Activated T-helper 2 cell treated with anti-CD3 and anti-CD28 coated beads, Interferon-gamma antibody, Interleukin-2, Interleukin-4, amounts not matched to agents 10 μg/mL and 5 μg/mL and 100 μg/mL, durations not matched to agents 14 hours and 24 hours and 36 hours (primary cell): ENCODE measurements at regions of chrX and their contacts with region 1.

Region 1: DNA sequence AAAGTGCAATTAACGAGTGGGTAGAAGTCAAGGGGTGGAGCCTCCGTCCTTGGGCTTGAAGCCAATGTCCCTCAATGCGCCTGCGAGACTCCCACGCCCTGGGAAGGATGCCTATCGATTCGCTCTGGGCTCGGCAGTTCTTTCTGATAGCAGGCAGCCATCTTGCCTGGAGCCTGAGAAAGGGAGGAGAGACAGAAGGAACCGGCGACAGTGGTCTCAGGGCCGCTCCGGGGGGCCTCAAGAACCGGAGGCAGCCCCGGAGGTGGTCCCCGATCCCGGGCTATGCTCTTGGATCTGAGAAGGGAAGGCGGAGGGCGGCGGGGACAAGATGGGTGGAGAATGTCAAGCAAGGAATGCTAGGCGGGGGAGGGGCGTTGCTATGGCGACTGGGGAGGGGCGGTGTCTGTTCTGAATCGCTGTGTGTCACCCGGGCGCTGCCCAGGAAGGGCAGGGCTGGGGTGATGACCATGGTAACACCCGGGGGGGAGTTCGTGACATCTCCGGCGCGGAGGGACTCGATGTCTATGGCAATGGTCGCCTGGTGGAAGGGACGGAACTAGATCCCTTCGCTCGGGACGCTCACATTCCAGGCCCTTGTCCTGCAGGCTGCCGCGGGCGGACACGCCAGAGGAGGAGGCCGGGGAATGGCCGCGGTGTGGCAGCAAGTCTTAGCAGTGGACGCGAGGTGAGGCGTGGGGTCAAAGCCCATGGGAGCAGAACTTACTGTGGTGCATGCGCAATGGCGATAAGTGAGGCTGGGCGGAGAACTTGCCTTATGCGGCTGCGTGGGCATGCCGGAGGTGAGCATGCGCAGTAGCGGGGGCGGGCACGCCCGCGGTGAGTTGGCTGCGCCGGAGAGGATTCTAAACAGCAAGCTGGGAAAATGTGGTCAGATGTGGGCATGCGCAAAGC is at the start of gene WDR13:
- DNase-seq: peak; percentile 86
- H3K4me3 Mint-ChIP-seq: peak within 1 kb of the TSS; percentile 94
- H3K27ac Mint-ChIP-seq: peak within 1 kb of the TSS; percentile 99
- H3K4me1 Mint-ChIP-seq: peaks cover 6% of the 10 kb centered on the region
- H3K27me3 Mint-ChIP-seq: no peaks in the 10 kb centered on the region
- total RNA-seq, gene WDR13: 43.4 and 44.7 TPM in 2 replicates

Region 2: GRCh38 chrX:48475774-48476577 is 121.6 kb before region 1 on chrX and contains the start of gene FTSJ1:
- intact Hi-C with region 1: loop called (anchors 5 kb)
- DNase-seq: peak; percentile 88
- H3K4me3 Mint-ChIP-seq: peak within 1 kb of the TSS; percentile 98
- H3K27ac Mint-ChIP-seq: peak within 1 kb of the TSS; percentile 95
- H3K4me1 Mint-ChIP-seq: peaks cover 32% of the 10 kb centered on the region
- H3K27me3 Mint-ChIP-seq: no peaks in the 10 kb centered on the region
- total RNA-seq, gene FTSJ1: 84.6 and 89.8 TPM in 2 replicates

Region 3: GRCh38 chrX:48574270-48575266 is 23.0 kb before region 1 on chrX and contains the start of gene RBM3:
- intact Hi-C with region 1: loop called (anchors 1 kb)
- DNase-seq: peak; percentile 89
- H3K4me3 Mint-ChIP-seq: peak within 1 kb of the TSS; percentile 99
- H3K27ac Mint-ChIP-seq: peak within 1 kb of the TSS; percentile 100
- H3K4me1 Mint-ChIP-seq: peaks cover 17% of the 10 kb centered on the region
- H3K27me3 Mint-ChIP-seq: no peaks in the 10 kb centered on the region
- total RNA-seq, gene RBM3: 345 and 346 TPM in 2 replicates

Region 4: DNA sequence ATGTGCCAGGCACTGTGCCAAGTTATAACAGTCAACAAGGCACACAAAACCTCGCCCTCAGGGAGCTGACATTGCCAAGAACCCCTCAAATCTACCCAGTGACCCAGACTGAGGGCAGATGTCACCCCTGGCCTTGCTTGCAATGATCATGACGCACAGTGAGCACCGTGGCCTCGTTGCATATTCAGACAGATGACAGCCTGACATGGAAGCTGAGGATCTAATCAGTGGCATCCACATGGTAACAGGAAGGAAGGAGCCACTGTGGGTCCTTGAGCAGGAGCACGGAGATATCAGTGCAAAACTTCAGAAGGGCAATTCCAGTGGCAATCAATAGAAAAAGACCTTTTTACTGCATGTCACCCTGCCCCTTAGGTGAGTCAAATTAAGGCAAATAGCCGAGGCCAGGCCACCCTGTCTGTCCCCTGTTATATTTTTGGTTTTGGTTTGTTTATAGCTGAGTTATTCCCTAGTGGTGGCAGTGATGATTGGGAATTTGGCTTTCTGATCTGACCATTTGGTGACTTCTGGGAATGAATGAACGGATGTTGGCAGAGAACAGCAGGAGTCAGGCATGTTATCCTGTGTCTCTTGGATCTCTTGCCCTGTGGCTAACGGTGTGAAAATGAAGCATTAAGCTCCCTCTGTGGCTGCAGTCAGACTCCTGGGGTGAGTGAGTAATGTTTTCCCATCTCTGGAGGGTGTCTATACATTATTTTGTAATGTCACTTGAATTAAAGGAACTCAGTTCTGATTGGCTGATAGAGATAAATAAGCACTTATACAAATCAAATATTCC is 20.1 kb after region 1 on chrX:
- intact Hi-C with region 1: no loop called
- DNase-seq: no peak
- H3K4me3 Mint-ChIP-seq: no peak overlapping the region
- H3K27ac Mint-ChIP-seq: no peak overlapping the region
- H3K4me1 Mint-ChIP-seq: peaks cover 2% of the 10 kb centered on the region
- H3K27me3 Mint-ChIP-seq: peaks cover 5% of the 10 kb centered on the region

Region 5: GRCh38 chrX:48676106-48676892 is 78.7 kb after region 1 on chrX:
- intact Hi-C with region 1: loop called (anchors 5 kb)
- DNase-seq: peak; percentile 86
- H3K4me3 Mint-ChIP-seq: peak overlapping the region; percentile 91
- H3K27ac Mint-ChIP-seq: peak overlapping the region; percentile 91
- H3K4me1 Mint-ChIP-seq: peaks cover 13% of the 10 kb centered on the region
- H3K27me3 Mint-ChIP-seq: no peaks in the 10 kb centered on the region